Astrocyte of the cerebellum (primary cell): ENCODE measurements at regions of chr16 and their contacts with region 1.

Region 1: DNA sequence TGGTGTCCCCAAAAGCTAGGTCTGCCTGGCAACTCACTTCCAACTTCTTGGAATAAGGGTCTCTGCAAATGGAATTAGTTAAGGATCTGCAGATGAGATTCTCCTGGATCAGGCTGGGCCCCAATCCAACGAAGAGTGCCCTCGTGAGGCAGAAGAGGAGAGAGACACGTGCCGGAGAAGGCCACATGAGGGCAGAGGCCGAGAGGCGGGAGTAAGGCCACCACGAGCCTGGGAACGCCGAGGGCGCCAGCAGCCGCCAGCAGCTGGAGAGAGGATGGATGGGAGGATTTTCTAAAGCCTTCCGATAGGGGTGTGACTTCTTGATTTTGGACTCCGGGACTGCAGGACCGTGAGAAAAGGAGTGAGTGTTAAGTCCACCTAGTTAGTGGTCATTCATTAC is 76.3 kb downstream of the JPH3 start:
- DNase-seq: no peak
- H3K4me3 ChIP-seq: no peak overlapping the region
- CTCF ChIP-seq: peak; percentile 13

Region 2: DNA sequence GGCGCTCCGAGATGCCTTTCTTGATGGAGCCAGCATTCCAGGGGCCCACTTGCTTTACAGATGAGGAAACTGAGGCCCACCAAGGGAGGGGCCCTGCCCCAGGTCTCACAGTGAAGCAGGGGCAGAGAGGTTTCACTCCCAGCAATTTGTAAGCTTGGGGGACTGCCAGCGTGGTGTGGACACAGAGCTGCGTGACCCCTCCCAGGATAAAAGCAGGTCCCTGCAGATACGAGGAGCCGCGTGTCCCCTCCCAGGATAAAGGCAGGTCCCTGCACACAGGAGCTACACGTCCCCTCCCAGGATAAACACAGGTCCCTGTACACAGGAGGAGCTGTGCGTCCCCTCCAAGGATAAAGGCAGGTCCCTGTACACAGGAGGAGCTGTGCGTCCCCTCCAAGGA is 64.7 kb before region 1 on chr16:
- in situ Hi-C with region 1: loop called (anchors 5 kb)
- DNase-seq: no peak
- H3K4me3 ChIP-seq: no peak overlapping the region
- CTCF ChIP-seq: no peak

Region 3: DNA sequence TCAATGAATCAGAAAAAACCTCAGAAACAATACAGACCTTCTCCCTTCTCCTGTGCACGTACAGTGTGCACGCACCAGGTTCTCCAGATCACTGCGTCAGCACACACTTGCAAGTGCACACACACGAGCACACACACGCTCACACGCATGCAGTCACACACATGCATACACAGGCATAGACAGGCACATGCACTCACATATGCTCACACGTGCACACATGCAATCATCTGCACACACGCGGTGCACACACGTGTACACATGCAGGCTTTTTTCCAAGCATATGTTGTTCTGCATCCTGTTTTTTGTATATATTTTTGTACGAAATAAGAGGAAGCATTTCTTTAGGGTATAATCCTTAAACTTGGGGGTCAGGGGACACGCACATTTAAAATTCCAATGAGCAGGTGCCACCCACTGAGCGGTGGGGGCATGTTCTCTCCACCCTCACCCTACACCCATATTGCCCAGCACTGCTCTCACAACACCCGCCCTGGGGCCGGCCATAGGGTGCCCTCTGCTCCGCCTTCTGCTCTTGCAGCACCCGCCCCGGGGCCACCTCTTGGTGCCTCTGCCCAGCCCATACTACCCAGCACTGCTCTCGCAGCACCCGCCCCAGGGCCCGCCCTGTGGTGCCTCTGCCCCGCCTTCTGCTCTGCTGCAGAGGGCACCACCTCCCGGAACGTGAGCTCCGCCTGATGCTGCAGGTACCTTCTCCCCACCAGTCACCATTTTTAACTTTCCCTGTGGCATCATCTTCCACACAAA is 66.3 kb after region 1 on chr16:
- in situ Hi-C with region 1: no loop called
- DNase-seq: no peak
- H3K4me3 ChIP-seq: no peak overlapping the region
- CTCF ChIP-seq: no peak

Region 4: DNA sequence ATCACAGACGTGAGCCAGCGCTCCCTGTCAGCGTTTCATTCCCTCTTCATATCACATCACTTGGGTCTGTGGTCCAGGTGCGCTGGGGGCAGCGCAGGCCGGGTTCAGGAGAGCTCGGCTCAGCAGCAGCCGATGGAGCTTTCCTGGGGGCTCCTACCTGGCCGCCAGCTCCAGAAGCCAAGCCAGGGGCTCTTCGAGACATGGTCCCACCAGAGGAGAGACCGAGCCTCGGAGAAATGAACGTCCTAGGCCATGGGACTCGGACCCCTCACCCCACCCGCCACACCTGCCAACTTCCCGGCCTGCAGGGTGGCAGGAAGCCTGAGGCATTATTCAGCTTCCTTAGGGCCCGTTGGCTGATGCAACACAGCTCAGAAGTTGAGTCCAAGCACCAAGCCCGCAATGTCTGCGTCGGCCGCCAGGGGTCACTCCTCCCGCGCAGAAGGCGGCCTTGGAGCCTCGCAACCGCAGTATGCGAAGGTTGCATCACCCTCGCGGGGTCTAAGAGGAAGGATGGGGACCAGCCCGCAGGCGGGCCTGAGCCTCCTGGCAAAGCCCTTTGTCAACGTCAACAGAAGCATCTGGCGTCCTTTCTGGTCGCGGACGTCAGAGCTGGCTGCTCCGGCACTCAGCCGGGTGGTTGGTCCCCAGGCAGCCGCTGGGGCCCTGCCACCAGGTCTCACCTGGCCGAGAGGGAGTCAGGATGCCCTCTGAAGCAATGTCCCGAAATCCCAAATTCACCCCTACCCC is 100.4 kb after region 1 on chr16:
- in situ Hi-C with region 1: no loop called
- DNase-seq: peak; percentile 84
- H3K4me3 ChIP-seq: no peak overlapping the region
- CTCF ChIP-seq: peak; percentile 81